A673 (cell line): ENCODE measurements at regions of chr16 and their contacts with region 1.

Region 1: DNA sequence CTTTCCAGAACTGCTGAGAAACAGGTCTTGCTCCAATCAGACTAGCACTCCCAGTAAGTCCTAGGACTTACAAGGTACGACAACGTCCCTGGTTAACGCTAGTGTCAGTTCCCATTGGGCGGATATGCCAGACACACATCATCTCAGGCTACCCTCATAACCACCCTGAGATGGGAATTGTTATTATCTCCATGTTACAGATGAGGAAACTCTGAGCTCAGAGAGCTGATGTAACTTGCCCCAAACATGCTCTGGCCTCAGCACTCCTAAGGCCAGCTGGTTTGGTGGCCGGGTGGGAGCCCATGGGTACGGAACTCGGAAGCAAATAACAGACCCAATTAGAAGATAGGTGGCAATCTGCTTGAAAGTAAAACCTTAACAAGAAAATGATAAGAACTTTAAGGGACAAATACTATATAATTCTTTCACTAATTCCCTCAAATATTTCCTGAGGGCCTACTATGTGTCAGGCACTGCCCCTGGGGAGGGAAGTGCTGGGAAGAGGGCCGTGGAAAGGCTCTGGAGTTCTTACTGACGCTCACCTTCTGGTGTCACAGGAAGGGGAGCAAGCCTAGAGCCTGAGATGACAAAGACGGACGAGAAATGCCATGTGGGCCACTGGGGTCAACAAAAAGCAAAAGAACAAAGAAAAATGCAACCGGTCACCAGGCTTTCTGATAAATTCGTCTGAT is 6.9 kb downstream of the CREBBP start:
- DNase-seq: no peak
- H3K4me3 ChIP-seq: no peak overlapping the region
- H3K27ac ChIP-seq: peak overlapping the region; percentile 26
- H3K4me1 ChIP-seq: peaks cover 61% of the 10 kb centered on the region
- H3K27me3 ChIP-seq: no peaks in the 10 kb centered on the region
- CTCF ChIP-seq: no peak

Region 2: DNA sequence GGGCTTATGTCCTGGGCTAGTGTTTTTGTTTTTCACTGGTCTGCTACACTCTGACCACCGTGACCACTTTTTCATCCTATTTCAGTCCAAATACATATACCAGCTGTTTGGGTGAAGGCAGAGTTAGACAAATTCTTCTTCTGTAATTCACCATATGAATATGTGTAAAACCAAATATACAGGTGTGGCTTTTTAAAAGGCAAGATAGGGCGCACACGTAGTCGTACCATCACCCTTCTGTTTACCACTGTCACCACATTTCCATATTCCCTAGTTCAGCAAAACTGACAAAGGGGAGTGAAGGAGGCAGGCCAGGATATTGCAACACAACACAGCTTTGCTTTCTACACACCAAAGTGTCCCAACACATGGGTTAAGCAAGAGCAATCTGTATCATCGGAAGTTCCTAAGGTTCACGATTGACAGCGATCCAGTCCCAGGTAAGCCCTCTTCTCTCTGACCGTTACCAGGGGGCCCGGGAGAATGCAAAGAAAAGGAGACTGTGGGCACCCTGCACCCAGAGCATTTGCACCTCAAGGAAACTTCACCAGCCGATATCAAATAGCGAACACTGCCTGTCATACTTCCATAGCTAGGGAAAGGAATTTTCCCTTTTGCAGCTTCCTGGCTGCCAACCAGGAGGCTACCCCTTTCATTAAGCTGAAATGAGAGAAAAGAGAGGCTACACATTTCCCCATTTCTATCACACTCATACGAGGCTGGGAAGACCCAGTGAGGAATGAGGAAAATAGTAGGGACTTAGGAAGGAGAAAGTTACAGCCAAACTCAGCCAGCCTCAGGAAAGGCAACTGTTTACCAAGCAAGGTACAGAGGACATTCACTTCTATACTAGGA is 16.2 kb before region 1 on chr16:
- CTCF ChIA-PET with region 1: no interaction called
- POLR2A ChIA-PET with region 1: interaction called, 13 read pairs
- intact Hi-C with region 1: no loop called
- DNase-seq: peak; percentile 65
- H3K4me3 ChIP-seq: no peak overlapping the region
- H3K27ac ChIP-seq: peak overlapping the region; percentile 60
- H3K4me1 ChIP-seq: peaks cover 47% of the 10 kb centered on the region
- H3K27me3 ChIP-seq: no peaks in the 10 kb centered on the region
- CTCF ChIP-seq: no peak